ENCODE measurements at regions of chr10 and their contacts with region 1.

Region 1: DNA sequence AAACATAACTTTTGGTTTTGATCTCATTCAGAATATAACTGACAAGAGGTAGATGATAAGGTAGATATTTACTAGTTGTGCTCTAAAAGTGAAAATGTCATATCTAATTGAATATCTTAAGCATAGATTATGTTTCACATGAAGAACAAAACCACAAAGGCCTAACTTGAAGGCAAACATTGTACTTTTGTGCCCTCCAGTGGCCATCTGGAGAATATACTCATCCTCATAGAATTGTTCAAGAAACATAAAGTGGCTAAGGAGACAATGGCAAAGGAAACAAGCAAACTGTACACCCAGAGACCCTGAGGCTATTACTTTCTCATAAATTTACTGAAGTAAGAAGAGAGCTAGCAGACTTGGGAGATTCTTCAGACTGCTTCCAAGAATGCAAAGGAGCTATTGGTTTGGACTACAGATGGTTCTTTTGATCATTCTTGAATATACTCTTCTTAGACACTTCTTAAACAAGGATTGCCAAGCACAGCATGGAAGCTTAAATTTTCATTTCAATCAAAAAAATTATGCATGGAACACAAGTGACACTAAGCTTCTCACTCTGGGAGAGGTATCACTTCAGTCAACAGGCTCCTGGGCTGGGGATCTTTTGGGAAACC is 98.2 kb upstream of the DKK1 start:
- DNase-seq: peak; percentile 25
- CTCF ChIP-seq: peak; percentile 76

Region 2: DNA sequence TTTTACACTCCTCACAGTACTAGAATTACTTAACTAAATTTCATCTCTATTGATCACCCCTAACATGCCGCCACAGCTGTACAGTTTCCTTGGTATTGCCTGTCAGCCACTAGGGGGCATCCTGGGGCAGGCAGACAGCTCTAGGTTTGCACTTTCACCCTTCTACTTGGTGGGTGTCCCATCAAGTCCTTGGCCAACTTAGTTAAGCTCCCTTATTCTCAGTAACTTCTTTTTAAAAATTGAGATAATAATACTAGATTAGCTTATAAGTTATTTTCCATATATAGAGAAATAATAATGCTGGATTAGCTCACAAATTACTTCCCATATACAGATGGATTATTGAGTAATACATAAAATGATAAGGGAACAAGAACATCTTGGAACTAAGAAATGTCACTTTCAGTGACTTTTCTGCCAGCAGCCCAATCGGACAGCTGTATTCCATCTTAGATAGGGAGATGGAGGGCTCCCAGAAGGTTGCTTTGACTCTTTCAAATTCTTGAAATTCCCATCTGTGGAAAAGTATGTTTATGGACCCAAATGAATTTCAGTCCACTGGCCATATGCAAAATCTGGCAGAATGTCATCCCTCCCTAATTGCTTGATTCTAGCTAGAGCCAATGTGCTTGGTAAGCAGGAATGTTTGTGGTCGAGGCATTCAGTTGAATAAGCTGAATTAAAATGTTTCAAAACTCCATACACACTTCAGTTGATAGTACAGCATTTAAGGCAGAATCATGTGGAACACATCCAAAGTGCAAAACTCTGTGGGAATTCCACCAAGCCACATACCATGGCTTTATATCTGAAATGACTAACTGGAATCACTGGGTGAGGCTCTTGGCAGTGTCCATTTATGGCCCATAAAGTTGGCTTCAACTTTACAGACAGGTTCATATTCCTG is 826.2 kb before region 1 on chr10:
- in situ Hi-C with region 1: loop called (anchors 25 kb)
- DNase-seq: peak; percentile 60
- CTCF ChIP-seq: peak; percentile 87

Region 3: DNA sequence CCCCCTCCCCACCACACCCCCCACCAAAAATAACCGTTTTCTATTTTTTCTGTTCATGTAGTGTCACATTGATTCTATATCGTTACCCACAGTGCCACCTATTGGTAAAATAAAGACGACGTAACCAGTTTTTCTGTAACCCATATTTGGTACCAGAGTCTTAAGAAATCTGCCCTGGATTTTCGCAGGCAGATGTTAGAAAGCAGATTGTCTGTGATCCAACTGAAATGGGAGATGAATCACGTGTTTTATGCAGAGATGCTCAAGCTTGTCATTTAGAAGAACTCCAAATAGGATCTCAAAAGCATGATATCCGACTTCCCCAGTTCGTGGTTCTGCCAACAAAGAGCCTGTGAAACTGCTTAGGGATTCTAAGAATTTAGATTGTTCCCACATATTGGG is 255.4 kb before region 1 on chr10:
- in situ Hi-C with region 1: no loop called
- DNase-seq: peak; percentile 16
- CTCF ChIP-seq: peak; percentile 56